ENCODE measurements at regions of chr5 and their contacts with region 1.

Region 1: GRCh38 chr5:93407454-93407853 is 173.6 kb downstream of the NR2F1-AS1 start:
- DNase-seq: no peak
- ATAC-seq: no peak
- H3K4me3 ChIP-seq: no peak overlapping the region
- H3K27ac ChIP-seq: no peak overlapping the region
- H3K4me1 ChIP-seq: peaks cover 2% of the 10 kb centered on the region
- H3K27me3 ChIP-seq: no peaks in the 10 kb centered on the region
- CTCF ChIP-seq: no peak
- POLR2A ChIP-seq: no peak
- RAD21 ChIP-seq: no peak

Region 2: GRCh38 chr5:93130624-93131490 is 276.6 kb before region 1 on chr5:
- CTCF ChIA-PET with region 1: no interaction called
- POLR2A ChIA-PET with region 1: no interaction called
- dilution Hi-C with region 1: no loop called
- in situ Hi-C with region 1: no loop called
- intact Hi-C with region 1: loop called (anchors 10 kb)
- DNase-seq: no peak
- ATAC-seq: no peak
- H3K4me3 ChIP-seq: no peak overlapping the region
- H3K27ac ChIP-seq: no peak overlapping the region
- H3K4me1 ChIP-seq: peaks cover 5% of the 10 kb centered on the region
- H3K27me3 ChIP-seq: no peaks in the 10 kb centered on the region
- CTCF ChIP-seq: no peak
- POLR2A ChIP-seq: no peak
- RAD21 ChIP-seq: no peak

Region 3: GRCh38 chr5:93378073-93378472 is 29.4 kb before region 1 on chr5:
- CTCF ChIA-PET with region 1: no interaction called
- POLR2A ChIA-PET with region 1: no interaction called
- dilution Hi-C with region 1: no loop called
- in situ Hi-C with region 1: no loop called
- intact Hi-C with region 1: loop called (anchors 2 kb)
- DNase-seq: peak; percentile 95
- ATAC-seq: peak; percentile 72
- H3K4me3 ChIP-seq: no peak overlapping the region
- H3K27ac ChIP-seq: no peak overlapping the region
- H3K4me1 ChIP-seq: peaks cover 2% of the 10 kb centered on the region; the same call in 1 of the 2 replicates
- H3K27me3 ChIP-seq: no peaks in the 10 kb centered on the region
- CTCF ChIP-seq: no peak
- POLR2A ChIP-seq: no peak
- RAD21 ChIP-seq: no peak; the same call in 1 of the 2 replicates

Region 4: GRCh38 chr5:93519740-93520139 is 112.3 kb after region 1 on chr5:
- CTCF ChIA-PET with region 1: no interaction called
- POLR2A ChIA-PET with region 1: no interaction called
- dilution Hi-C with region 1: no loop called
- in situ Hi-C with region 1: no loop called
- intact Hi-C with region 1: no loop called
- DNase-seq: peak; percentile 59
- ATAC-seq: peak; percentile 87
- H3K4me3 ChIP-seq: no peak overlapping the region
- H3K27ac ChIP-seq: no peak overlapping the region
- H3K4me1 ChIP-seq: peaks cover 1% of the 10 kb centered on the region; the same call in 1 of the 2 replicates
- H3K27me3 ChIP-seq: no peaks in the 10 kb centered on the region
- CTCF ChIP-seq: no peak
- POLR2A ChIP-seq: no peak
- RAD21 ChIP-seq: no peak

Region 5: GRCh38 chr5:94316916-94317838 is 909.7 kb after region 1 on chr5:
- CTCF ChIA-PET with region 1: no interaction called
- POLR2A ChIA-PET with region 1: no interaction called
- dilution Hi-C with region 1: no loop called
- in situ Hi-C with region 1: no loop called
- intact Hi-C with region 1: no loop called
- DNase-seq: peak; percentile 14
- ATAC-seq: peak; percentile 61
- H3K4me3 ChIP-seq: no peak overlapping the region
- H3K27ac ChIP-seq: no peak overlapping the region
- H3K4me1 ChIP-seq: peaks cover 4% of the 10 kb centered on the region
- H3K27me3 ChIP-seq: no peaks in the 10 kb centered on the region
- CTCF ChIP-seq: no peak
- POLR2A ChIP-seq: no peak
- RAD21 ChIP-seq: no peak

Measured in IMR-90 (cell line).